ENCODE measurements at regions of chr4 and their contacts with region 1.

Region 1: DNA sequence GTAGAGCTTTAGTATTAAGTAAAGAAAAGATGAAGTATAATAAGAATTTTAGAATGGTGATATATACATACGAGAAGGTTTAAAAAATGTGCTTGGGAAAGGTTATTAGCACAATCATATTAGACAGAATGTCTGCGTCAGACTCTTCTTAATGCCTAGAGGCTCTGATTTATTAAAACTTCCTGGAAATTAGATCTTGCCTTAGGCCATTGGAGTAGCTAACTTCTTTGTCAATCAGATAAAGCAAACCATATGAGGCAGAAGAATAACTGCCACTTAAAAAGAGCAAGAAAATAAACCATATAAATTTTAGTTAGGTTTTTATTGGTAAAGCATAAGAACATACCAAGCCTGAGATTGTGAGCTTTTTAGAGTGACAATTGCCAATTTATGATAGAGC is 309.1 kb downstream of the TLL1 start:
- DNase-seq: no peak
- CTCF ChIP-seq: no peak

Region 2: GRCh38 chr4:165974647-165975335 is 207.4 kb before region 1 on chr4:
- CTCF ChIA-PET with region 1: no interaction called
- POLR2A ChIA-PET with region 1: no interaction called
- DNase-seq: no peak
- CTCF ChIP-seq: no peak

Region 3: GRCh38 chr4:166165829-166166420 is 16.2 kb before region 1 on chr4:
- CTCF ChIA-PET with region 1: interaction called, 19 read pairs
- POLR2A ChIA-PET with region 1: no interaction called
- DNase-seq: peak; percentile 37
- CTCF ChIP-seq: peak; percentile 63

Region 4: GRCh38 chr4:166198041-166198440 is 15.9 kb after region 1 on chr4:
- CTCF ChIA-PET with region 1: no interaction called
- POLR2A ChIA-PET with region 1: no interaction called
- DNase-seq: no peak
- CTCF ChIP-seq: no peak

Region 5: GRCh38 chr4:166518776-166519175 is 336.6 kb after region 1 on chr4:
- CTCF ChIA-PET with region 1: no interaction called
- POLR2A ChIA-PET with region 1: no interaction called
- DNase-seq: no peak
- CTCF ChIP-seq: no peak

Measured in GM10248 (cell line).